ENCODE measurements at regions of chrX and their contacts with region 1.

Region 1: GRCh38 chrX:30713061-30713525 is 59.9 kb downstream of the GK start:
- DNase-seq: peak; percentile 65
- H3K4me3 Mint-ChIP-seq: no peak overlapping the region
- H3K27ac Mint-ChIP-seq: peak overlapping the region; percentile 82
- H3K4me1 Mint-ChIP-seq: peaks cover 22% of the 10 kb centered on the region
- H3K27me3 Mint-ChIP-seq: no peaks in the 10 kb centered on the region

Region 2: GRCh38 chrX:30577362-30577991 is 135.6 kb before region 1 on chrX and contains the start of gene TASL:
- CTCF ChIA-PET with region 1: interaction called, 4 read pairs
- intact Hi-C with region 1: loop called (anchors 1 kb)
- DNase-seq: peak; percentile 48
- H3K4me3 Mint-ChIP-seq: peak within 1 kb of the TSS; percentile 82
- H3K27ac Mint-ChIP-seq: peak within 1 kb of the TSS; percentile 86
- H3K4me1 Mint-ChIP-seq: peaks cover 17% of the 10 kb centered on the region
- H3K27me3 Mint-ChIP-seq: no peaks in the 10 kb centered on the region
- total RNA-seq, gene TASL: 0.79 to 1.1 TPM

Region 3: GRCh38 chrX:30643313-30643821 is 69.7 kb before region 1 on chrX:
- CTCF ChIA-PET with region 1: no interaction called
- intact Hi-C with region 1: loop called (anchors 1 kb)
- DNase-seq: no peak
- H3K4me3 Mint-ChIP-seq: no peak overlapping the region
- H3K27ac Mint-ChIP-seq: peak overlapping the region; percentile 82
- H3K4me1 Mint-ChIP-seq: peaks cover 24% of the 10 kb centered on the region
- H3K27me3 Mint-ChIP-seq: no peaks in the 10 kb centered on the region

Region 4: GRCh38 chrX:30659421-30659820 is 53.7 kb before region 1 on chrX:
- CTCF ChIA-PET with region 1: no interaction called
- intact Hi-C with region 1: loop called (anchors 1 kb)
- DNase-seq: no peak
- H3K4me3 Mint-ChIP-seq: peak overlapping the region; percentile 29
- H3K27ac Mint-ChIP-seq: peak overlapping the region; percentile 85
- H3K4me1 Mint-ChIP-seq: peaks cover 34% of the 10 kb centered on the region
- H3K27me3 Mint-ChIP-seq: no peaks in the 10 kb centered on the region

Region 5: DNA sequence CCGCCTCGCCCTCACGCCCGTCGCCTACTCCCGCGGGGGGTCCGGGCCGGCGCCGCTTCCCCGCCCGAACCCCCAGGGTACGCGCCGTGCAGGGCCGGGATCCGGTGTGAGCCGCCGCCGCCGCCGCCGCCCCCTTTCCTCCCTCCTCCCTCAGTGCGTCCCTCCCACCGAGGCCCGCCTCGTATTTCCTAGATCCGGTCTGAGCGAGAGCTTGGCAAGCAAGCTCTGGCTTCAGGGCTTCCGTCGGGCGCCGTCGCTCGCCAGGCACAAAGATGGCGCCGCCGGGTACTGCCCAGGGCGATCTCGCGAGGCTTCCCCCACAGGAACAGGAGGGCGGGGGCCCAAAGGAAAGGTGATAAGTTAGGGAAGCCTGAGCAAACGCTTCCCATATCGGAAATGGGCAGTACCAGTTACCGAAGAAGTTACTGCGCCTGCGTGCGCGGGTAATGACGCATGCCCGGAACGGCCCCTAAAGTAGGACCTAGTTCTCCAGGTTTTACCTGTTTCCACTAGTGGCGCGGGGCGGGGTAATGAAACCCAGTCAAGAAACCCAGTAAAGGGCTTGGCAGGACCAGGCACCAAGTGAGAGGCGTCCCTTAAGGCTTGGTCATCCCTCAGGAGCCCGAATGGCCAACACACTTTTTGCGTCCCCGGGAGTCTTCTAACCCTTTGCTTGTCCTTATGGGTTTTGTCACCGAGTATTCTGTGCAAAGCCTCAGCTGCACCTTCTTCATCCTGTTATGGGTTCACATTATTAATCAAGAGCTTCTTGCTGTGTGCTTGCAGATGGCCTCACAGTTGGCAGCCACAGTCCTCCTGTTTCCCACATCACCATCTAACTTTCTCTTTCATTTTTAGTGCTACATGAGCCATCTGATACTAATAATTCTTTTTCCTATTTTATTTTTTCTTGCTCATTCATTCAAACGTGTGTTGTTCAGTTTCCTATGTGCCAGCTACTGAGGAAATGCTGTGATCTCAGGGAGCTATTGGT is 176.4 kb after region 1 on chrX and contains the start of gene TAB3:
- CTCF ChIA-PET with region 1: no interaction called
- intact Hi-C with region 1: loop called (anchors 1 kb)
- DNase-seq: peak; percentile 95
- H3K4me3 Mint-ChIP-seq: peak within 1 kb of the TSS; percentile 85
- H3K27ac Mint-ChIP-seq: peak within 1 kb of the TSS; percentile 93
- H3K4me1 Mint-ChIP-seq: peaks cover 30% of the 10 kb centered on the region
- H3K27me3 Mint-ChIP-seq: no peaks in the 10 kb centered on the region
- total RNA-seq, gene TAB3: 13.6 to 15.7 TPM

Measured in activated naive CD4-positive, alpha-beta T cell treated with anti-CD3 and anti-CD28 coated beads for 36 hours (primary cell).